ENCODE measurements at regions of chr1 and their contacts with region 1.

Region 1: DNA sequence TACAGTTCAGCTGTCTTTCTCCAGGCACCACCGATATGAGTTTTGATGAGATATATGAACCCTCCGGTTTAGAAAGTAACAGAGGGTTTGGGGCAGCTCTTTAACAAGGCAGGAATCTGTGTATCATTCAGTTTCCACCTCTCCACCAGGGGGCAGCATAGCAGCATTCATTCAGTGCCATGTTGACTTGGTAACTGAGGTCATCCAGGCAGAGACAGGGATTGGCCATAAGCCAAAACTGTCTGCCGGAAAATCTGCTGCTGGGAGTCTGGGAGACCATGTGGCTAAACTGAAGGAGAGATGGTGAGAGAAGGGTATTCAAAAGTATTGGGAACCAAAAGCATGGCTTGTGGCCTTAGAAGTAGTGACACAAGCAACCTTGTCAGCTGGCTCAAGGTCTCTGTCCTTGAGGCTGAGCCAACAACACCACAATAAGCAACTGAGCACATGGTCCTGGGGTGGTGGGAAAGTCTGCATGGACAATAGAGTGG is 98.5 kb downstream of the LMX1A start:
- DNase-seq: peak; percentile 87
- ATAC-seq: peak; percentile 92
- H3K4me3 Mint-ChIP-seq: no peak overlapping the region
- H3K27ac Mint-ChIP-seq: no peak overlapping the region
- H3K4me1 Mint-ChIP-seq: peaks cover 13% of the 10 kb centered on the region
- H3K27me3 Mint-ChIP-seq: peaks cover 30% of the 10 kb centered on the region
- CTCF ChIP-seq: peak; percentile 79

Region 2: DNA sequence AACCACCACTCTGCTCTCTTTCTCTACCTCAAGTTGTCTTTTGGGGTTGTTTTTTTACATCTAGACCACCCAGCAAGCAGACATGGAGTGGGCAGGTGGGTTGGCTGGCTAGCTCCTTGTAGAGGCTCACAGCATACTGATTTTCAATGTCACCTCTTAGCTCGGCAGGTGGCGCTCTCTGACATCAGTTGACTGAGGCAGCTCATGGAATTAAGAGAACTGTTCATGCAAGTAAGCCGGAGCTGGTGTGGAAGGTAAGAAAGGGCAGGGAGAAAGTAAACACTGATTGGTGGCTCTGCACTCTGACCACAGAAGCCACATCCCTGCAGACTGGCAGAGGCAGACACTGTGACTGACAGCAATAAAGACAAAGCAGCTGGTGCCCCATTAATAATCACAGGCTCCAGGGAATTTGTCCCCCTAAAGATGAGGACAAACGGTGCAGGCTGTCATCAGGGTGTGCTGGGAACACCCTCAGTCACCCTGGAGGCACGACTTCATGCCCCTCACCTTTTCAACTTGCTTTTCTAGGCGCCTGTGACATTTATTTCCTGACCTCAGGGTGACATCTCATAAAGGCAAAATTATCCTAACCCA is 128.3 kb before region 1 on chr1:
- CTCF ChIA-PET with region 1: interaction called, 16 read pairs
- POLR2A ChIA-PET with region 1: no interaction called
- DNase-seq: peak; percentile 89
- ATAC-seq: peak; percentile 99
- H3K4me3 Mint-ChIP-seq: no peak overlapping the region
- H3K27ac Mint-ChIP-seq: no peak overlapping the region
- H3K4me1 Mint-ChIP-seq: peaks cover 2% of the 10 kb centered on the region; the same call in 1 of the 2 replicates
- H3K27me3 Mint-ChIP-seq: no peaks in the 10 kb centered on the region; the same call in 1 of the 2 replicates
- CTCF ChIP-seq: peak; percentile 40; the same call in 1 of the 2 replicates

Region 3: GRCh38 chr1:165284454-165284853 is 26.4 kb after region 1 on chr1:
- CTCF ChIA-PET with region 1: interaction called, 21 read pairs
- POLR2A ChIA-PET with region 1: no interaction called
- DNase-seq: no peak
- ATAC-seq: no peak
- H3K4me3 Mint-ChIP-seq: no peak overlapping the region
- H3K27ac Mint-ChIP-seq: no peak overlapping the region
- H3K4me1 Mint-ChIP-seq: peaks cover 29% of the 10 kb centered on the region
- H3K27me3 Mint-ChIP-seq: no peaks in the 10 kb centered on the region
- CTCF ChIP-seq: no peak

Region 4: DNA sequence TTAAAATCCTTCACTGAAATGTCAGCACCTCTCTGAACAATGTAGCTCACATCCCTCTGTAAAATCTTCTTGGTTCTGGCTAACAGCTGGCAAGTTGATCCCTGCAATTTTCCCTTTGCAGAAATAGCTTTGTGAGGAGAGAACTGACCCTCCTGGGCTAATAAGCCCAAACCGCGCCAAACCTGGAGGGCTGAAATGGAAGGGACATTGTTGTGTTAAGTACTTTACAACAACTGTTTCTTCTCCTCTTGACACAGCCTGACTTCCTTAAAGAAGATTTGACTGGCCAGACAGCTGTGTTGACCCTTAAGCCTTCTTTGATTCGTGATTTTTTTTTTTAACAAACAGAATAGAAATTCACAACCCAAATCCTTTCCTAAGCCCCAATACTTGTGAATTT is 92.8 kb after region 1 on chr1:
- CTCF ChIA-PET with region 1: interaction called, 13 read pairs
- POLR2A ChIA-PET with region 1: no interaction called
- DNase-seq: peak; percentile 54
- ATAC-seq: peak; percentile 31
- H3K4me3 Mint-ChIP-seq: peak overlapping the region; percentile 49
- H3K27ac Mint-ChIP-seq: no peak overlapping the region
- H3K4me1 Mint-ChIP-seq: peaks cover 75% of the 10 kb centered on the region
- H3K27me3 Mint-ChIP-seq: peaks cover 81% of the 10 kb centered on the region
- CTCF ChIP-seq: no peak

Region 5: GRCh38 chr1:165376041-165376810 is 118.2 kb after region 1 on chr1:
- CTCF ChIA-PET with region 1: interaction called, 10 read pairs
- POLR2A ChIA-PET with region 1: no interaction called
- DNase-seq: peak; percentile 79
- ATAC-seq: peak; percentile 92
- H3K4me3 Mint-ChIP-seq: peak overlapping the region; percentile 76
- H3K27ac Mint-ChIP-seq: no peak overlapping the region
- H3K4me1 Mint-ChIP-seq: peaks cover 13% of the 10 kb centered on the region
- H3K27me3 Mint-ChIP-seq: peaks cover 74% of the 10 kb centered on the region
- CTCF ChIP-seq: no peak

Measured in WTC11 (cell line).